ENCODE measurements at regions of chr1 and their contacts with region 1.

Region 1: DNA sequence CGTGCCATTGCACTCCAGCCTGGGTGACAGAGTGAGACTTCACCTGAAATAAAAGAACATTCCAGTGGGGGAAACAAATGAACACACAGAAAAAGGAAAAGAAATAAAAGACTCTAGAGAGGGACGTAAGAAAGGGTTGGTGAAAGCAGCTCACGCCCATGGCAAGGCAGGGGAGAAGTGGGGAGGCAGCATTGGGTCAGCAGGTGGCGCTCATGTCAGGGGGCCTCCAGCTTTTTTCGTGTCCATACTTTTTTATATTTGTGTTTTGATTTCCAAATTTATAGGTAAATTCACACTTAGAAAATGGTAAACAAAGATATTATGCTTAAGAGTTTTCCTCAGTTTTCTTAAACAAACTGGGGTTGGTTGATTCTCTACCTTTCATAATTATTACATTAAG is 45.5 kb downstream of the VPS13D start:
- DNase-seq: peak; percentile 63
- H3K4me3 Mint-ChIP-seq: no peak overlapping the region
- H3K27ac Mint-ChIP-seq: no peak overlapping the region
- H3K4me1 Mint-ChIP-seq: no peaks in the 10 kb centered on the region
- H3K27me3 Mint-ChIP-seq: no peaks in the 10 kb centered on the region

Region 2: DNA sequence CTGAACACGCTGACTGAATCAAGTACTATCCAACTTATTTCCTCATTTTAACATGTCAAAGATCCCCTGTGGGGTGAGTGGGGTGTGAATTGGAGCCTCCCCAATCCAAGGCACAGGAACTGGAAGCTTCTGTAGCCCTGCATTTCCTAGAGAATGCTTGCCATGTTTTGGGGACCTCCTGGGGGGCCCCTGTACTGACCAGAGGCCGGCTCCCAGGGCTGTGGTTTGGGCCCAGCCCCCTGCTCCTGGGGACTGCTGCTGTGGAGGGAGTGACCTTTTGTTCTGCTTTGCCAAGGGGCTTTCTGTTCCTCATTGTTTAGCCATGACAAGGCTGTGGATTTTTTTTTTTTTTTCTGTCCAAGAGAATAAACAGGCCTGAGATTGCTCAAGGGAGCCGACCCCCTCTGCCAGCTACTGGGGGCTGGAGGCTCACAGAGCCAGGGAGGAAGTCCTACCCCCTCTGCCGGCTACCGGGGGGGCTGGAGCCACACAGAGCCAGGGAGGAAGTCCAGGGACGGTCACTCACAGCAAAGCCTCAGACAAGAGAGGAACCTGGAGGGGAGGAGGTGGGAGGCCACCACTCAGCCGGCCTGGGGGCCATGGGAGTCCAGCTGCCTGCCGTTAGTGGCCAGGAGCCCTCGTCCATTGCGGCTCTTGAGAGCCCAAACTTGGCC is 91.2 kb before region 1 on chr1:
- CTCF ChIA-PET with region 1: no interaction called
- POLR2A ChIA-PET with region 1: no interaction called
- intact Hi-C with region 1: no loop called
- DNase-seq: no peak
- H3K4me3 Mint-ChIP-seq: no peak overlapping the region
- H3K27ac Mint-ChIP-seq: peak overlapping the region; percentile 38
- H3K4me1 Mint-ChIP-seq: peaks cover 70% of the 10 kb centered on the region
- H3K27me3 Mint-ChIP-seq: no peaks in the 10 kb centered on the region

Region 3: DNA sequence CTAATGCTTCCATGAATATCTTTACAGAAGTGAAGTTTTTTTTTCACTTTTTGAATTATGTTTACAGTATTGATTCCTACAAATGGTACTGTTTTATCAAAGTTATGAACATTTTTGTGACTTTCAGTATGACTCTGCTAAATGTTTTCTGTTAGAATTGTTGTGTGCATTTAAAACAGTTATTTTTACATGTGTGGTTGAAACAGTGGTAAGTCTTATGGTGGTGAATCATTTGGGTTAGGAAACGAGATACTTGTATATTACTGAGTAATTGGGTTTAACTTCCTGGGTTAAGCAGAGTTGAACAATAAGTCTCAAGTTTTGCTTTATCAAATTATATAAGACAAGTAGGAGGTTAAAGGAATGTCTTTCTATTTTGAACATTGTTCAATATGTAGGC is 21.3 kb after region 1 on chr1:
- CTCF ChIA-PET with region 1: interaction called, 15 read pairs
- POLR2A ChIA-PET with region 1: interaction called, 3 read pairs
- intact Hi-C with region 1: no loop called
- DNase-seq: no peak
- H3K4me3 Mint-ChIP-seq: no peak overlapping the region
- H3K27ac Mint-ChIP-seq: no peak overlapping the region
- H3K4me1 Mint-ChIP-seq: peaks cover 24% of the 10 kb centered on the region
- H3K27me3 Mint-ChIP-seq: no peaks in the 10 kb centered on the region